GM10248 (cell line): ENCODE measurements at regions of chr7 and their contacts with region 1.

Region 1: DNA sequence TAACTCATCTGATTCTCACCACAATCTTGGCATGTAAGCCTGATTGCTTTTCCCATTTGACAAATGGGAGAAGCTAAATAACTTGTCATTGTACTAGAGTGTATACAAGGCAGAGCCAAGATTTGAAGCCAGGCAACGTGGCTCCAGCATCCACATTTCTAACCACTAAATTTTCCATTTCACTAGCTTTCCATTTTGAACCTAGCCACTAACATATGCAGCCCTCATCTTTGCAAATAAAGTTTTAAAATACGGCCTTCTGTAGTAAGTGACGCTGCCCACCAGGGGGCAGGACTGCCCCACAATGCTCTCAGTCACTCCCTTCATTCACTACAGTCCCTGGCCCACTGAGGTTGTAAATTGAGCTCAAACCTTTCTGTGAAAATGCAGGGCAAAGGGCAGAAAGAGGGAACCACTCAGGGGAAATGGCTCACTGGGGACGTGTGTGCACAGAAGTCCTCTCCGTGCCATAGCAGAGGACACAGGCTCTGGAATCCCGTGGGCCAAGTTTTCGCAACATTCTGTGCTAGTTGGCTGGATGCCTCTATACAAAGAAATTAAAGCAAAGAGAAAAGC is 315.7 kb downstream of the TNS3 start:
- DNase-seq: peak; percentile 68
- CTCF ChIP-seq: peak; percentile 81

Region 2: GRCh38 chr7:47000561-47000960 is 265.7 kb before region 1 on chr7:
- CTCF ChIA-PET with region 1: no interaction called
- POLR2A ChIA-PET with region 1: no interaction called
- DNase-seq: no peak
- CTCF ChIP-seq: no peak

Region 3: GRCh38 chr7:47236480-47237129 is 29.6 kb before region 1 on chr7:
- CTCF ChIA-PET with region 1: interaction called, 11 read pairs
- POLR2A ChIA-PET with region 1: no interaction called
- DNase-seq: no peak
- CTCF ChIP-seq: no peak

Region 4: DNA sequence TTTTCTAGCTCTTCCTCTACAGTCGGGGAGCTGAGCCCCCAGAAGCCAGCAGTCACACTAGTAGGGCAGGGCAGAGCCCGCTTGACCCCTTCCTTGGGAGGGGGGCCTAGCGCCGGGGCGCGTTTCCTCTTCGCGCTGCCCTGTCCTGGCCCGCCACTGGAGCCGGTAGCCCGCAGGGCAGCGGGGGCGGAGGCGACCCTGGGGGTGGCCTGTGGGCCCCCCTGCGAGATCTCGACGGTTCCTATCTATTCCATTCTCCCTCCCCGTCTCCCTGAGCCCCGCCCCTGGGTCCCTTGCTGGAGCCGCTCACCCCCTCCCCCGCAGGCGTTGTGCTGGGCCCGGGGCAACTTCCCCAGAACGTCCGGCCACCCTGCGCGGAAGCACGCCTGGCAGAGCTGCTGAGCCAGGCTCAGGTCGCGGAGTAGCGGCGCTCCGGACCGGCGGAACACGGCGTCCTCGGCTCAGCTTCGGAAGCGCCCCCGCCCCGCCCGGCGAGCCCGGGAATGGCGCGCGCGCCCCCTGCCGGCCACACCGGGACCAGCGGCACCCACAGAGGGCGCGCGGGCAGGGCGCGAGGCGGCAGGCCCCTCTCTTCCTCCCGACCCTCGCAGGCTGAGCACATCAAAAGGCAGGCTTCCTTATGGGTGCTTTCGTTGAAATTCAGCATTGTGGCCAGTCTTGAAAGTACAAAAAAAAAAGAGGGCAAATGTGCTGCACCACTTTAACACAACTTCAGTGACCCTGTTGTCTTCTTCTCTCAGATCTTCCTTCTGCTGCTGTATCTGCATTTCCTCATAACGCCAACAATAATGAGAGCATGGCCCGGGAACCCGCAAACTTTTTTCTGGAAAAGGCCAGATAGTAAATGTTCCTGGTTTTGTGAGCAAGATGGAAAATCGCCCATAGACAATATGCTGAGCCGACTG is 11.9 kb before region 1 on chr7:
- CTCF ChIA-PET with region 1: interaction called, 21 read pairs
- POLR2A ChIA-PET with region 1: no interaction called
- DNase-seq: peak; percentile 88
- CTCF ChIP-seq: peak; percentile 94

Region 5: DNA sequence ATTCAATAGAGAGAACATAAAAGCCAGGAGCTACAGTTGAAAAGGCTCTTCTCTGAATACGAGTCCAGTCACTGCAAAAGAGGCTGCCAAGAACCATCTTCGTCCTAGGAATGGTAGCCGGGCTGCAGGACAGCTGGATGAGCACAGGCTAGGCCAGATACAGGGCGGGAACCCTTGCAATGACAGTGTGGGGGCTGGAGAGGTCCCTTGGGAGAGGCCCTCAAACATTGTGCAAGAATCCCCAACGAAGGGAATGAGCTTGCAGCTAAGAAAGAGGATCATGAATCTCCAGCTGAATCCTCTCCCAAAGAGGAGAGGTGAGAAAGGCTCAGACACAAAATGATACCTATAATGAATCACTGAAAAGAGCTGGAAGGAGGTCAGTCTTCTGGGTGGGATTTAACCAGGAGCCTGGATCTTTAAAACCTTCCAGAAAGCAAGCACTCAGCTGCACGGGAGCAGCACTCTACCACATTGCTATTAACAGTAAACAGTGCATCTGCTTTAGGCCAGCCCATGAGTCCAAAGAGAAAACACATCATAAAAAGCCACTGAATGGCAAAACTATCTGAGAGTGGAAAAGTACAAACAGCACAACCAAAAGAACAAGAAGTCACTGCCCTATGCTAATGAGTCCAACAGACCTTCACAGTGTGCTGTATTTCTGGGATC is 27.8 kb after region 1 on chr7:
- CTCF ChIA-PET with region 1: interaction called, 18 read pairs
- POLR2A ChIA-PET with region 1: no interaction called
- DNase-seq: no peak
- CTCF ChIP-seq: no peak

Region 6: GRCh38 chr7:47806701-47807103 is 540.5 kb after region 1 on chr7:
- CTCF ChIA-PET with region 1: interaction called, 11 read pairs
- POLR2A ChIA-PET with region 1: no interaction called
- DNase-seq: no peak
- CTCF ChIP-seq: no peak

Region 7: GRCh38 chr7:47827351-47827756 is 561.1 kb after region 1 on chr7:
- CTCF ChIA-PET with region 1: interaction called, 33 read pairs
- POLR2A ChIA-PET with region 1: no interaction called
- DNase-seq: no peak
- CTCF ChIP-seq: no peak

Region 8: GRCh38 chr7:47945261-47946001 is 679.2 kb after region 1 on chr7:
- CTCF ChIA-PET with region 1: interaction called, 10 read pairs
- POLR2A ChIA-PET with region 1: no interaction called
- DNase-seq: peak; percentile 59
- CTCF ChIP-seq: peak; percentile 86